Activated naive CD4-positive, alpha-beta T cell treated with anti-CD3 and anti-CD28 coated beads for 36 hours (primary cell): ENCODE measurements at regions of chr21 and their contacts with region 1.

Region 1: DNA sequence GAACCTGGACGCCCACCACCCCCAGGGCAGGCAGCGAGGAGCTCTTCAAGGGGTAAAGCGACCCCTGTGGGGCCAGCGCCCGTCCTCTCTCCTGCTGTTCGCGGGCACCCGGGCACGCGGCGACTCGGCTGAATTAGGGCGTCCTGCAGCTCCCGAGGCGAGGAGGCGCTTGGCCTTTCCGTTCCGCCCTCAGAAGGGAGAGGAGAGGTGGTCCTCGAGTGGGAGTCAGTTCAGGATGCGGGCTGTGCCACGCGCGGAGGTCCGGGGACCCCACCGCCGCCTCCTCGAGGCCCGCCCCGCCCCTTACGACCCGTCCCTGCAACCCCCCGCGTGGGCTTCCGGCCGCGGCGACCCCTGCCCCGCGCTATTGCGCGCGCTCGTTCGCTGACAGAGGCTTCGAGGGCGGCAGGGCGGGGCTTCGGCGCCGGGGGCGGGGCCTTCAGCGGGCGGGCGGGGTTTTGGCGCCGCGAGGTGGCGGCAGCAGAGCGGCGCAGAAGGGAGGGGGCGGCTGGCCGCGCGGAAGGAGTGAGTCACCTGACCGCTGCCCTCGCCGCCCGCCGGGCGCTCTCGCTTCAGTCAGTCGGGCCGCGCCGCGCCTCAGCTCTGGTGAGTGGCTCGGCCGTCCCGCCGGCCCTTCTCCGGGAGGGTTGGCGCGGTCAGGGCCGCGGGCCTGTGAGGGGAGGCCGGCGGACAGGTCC is at the start of gene BACH1:
- DNase-seq: peak; percentile 87
- H3K4me3 Mint-ChIP-seq: peak within 1 kb of the TSS; percentile 78
- H3K27ac Mint-ChIP-seq: peak within 1 kb of the TSS; percentile 76
- H3K4me1 Mint-ChIP-seq: peaks cover 66% of the 10 kb centered on the region
- H3K27me3 Mint-ChIP-seq: no peaks in the 10 kb centered on the region
- total RNA-seq, gene BACH1: 22.6 to 23.2 TPM

Region 2: DNA sequence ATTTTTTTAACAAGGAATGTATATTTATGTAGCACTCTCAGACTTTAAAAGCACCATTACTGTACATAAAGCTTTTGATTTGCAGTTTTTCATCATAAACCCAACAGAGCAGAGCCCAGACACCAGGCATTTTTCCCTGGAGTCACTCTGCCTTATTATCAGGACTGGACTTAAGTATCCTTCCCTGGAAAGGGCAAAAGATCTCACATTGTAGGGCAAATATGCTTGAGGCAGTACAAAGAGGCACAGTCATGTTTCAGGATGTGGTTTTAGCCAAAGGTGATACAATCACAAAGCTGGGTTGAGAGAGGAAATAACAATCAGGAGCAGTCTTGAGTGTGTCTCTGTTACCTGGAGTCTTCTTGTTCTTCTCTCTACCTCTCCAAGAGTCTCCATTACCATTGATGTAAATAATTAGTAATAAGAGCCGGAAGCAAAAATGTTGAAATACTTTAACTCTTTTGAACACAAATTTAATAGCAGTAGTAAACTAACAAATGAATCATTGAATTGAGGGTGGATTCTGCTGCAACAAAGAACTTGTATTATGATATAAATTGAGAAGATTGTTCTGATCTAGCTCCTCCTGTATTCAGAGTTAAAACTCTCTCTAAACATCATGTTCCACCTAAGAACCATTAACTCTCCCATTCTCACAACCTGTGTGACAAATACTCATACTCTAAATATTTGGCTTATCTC is 466.3 kb before region 1 on chr21:
- CTCF ChIA-PET with region 1: no interaction called
- intact Hi-C with region 1: loop called (anchors 10 kb)
- DNase-seq: peak; percentile 36
- H3K4me3 Mint-ChIP-seq: no peak overlapping the region
- H3K27ac Mint-ChIP-seq: no peak overlapping the region
- H3K4me1 Mint-ChIP-seq: peaks cover 57% of the 10 kb centered on the region
- H3K27me3 Mint-ChIP-seq: no peaks in the 10 kb centered on the region

Region 3: GRCh38 chr21:29024474-29025327 is 273.8 kb before region 1 on chr21 and contains the start of gene USP16:
- CTCF ChIA-PET with region 1: no interaction called
- intact Hi-C with region 1: loop called (anchors 1 kb)
- DNase-seq: peak; percentile 95
- H3K4me3 Mint-ChIP-seq: peak within 1 kb of the TSS; percentile 88
- H3K27ac Mint-ChIP-seq: peak within 1 kb of the TSS; percentile 98
- H3K4me1 Mint-ChIP-seq: peaks cover 42% of the 10 kb centered on the region
- H3K27me3 Mint-ChIP-seq: no peaks in the 10 kb centered on the region
- total RNA-seq, gene USP16: 36.1 to 36.7 TPM

Region 4: GRCh38 chr21:29164325-29164942 is 134.1 kb before region 1 on chr21:
- CTCF ChIA-PET with region 1: interaction called, 3 read pairs
- intact Hi-C with region 1: loop called (anchors 1 kb)
- DNase-seq: no peak
- H3K4me3 Mint-ChIP-seq: no peak overlapping the region
- H3K27ac Mint-ChIP-seq: no peak overlapping the region
- H3K4me1 Mint-ChIP-seq: no peaks in the 10 kb centered on the region
- H3K27me3 Mint-ChIP-seq: no peaks in the 10 kb centered on the region

Region 5: GRCh38 chr21:29208682-29209059 is 89.8 kb before region 1 on chr21:
- CTCF ChIA-PET with region 1: no interaction called
- intact Hi-C with region 1: loop called (anchors 1 kb)
- DNase-seq: no peak
- H3K4me3 Mint-ChIP-seq: no peak overlapping the region
- H3K27ac Mint-ChIP-seq: peak overlapping the region; percentile 75
- H3K4me1 Mint-ChIP-seq: peaks cover 30% of the 10 kb centered on the region
- H3K27me3 Mint-ChIP-seq: no peaks in the 10 kb centered on the region

Region 6: DNA sequence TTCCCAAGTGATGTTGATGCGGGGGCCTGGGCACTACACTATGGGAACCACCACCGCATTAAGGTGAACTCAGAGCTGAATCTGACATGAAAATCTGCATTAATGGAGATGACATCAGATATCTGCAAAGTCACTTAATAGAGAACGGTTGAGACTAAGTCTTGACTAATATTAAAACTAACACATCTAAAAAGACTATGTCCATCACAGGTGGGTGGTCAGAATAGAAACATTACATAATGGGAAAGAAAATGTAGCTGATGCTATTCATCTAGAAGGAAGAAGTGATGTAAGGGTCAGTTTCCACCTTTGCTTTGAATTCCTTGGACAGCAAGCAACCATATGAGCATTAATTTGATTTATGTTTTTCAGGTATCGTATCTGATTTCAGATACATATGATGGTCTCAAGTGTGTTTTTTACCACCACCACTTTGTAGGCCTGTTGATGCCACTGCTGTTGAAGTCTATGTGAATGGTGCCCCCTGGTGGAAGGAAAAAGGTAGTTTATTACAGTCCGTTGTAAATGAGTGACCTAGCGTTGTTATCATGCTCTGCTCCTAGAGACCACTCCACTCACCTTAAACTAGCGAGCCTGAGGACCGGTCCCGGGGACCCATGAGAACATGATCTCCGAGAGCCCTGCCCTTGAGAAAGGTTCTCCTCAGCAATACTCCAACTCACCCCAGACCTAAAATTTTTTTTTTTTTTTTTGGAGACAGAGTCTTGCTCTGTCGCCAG is 73.7 kb after region 1 on chr21:
- CTCF ChIA-PET with region 1: interaction called, 12 read pairs
- intact Hi-C with region 1: loop called (anchors 1 kb)
- DNase-seq: peak; percentile 67
- H3K4me3 Mint-ChIP-seq: no peak overlapping the region
- H3K27ac Mint-ChIP-seq: peak overlapping the region; percentile 60
- H3K4me1 Mint-ChIP-seq: peaks cover 25% of the 10 kb centered on the region
- H3K27me3 Mint-ChIP-seq: no peaks in the 10 kb centered on the region